ENCODE measurements at regions of chr7 and their contacts with region 1.

Region 1: DNA sequence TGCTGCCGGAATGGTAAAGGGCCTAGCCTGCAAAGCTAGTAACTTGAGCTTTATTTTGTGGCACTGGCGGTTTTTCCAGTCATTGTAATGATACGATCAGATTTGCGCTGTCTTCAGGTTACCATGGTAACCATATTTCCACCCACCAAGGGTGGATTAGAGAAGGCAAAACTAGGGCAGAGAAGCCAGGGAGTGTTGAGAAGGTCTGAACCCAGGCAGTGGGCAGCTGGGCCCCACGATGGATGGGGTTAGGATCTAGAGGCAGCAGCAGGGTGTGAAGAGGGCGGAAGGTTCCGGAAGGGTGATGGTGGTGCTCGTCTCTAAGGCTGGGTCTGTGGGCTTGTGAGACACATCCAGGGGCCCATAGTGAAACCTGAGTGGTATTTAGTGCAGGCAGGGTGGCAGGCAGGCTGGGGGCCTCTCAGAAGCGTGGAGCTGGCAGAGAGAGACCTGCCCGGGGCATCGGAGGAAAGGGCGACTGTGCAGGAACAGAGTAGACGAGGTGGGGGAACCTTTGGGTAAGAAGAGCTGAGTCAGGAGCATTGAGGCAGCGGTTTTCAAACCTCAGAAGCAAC is 87.9 kb upstream of the GTF2I start:
- DNase-seq: no peak
- H3K4me3 ChIP-seq: no peak overlapping the region
- H3K27ac ChIP-seq: no peak overlapping the region
- H3K4me1 ChIP-seq: no peaks in the 10 kb centered on the region
- H3K27me3 ChIP-seq: no peaks in the 10 kb centered on the region
- CTCF ChIP-seq: no peak
- POLR2A ChIP-seq: no peak

Region 2: DNA sequence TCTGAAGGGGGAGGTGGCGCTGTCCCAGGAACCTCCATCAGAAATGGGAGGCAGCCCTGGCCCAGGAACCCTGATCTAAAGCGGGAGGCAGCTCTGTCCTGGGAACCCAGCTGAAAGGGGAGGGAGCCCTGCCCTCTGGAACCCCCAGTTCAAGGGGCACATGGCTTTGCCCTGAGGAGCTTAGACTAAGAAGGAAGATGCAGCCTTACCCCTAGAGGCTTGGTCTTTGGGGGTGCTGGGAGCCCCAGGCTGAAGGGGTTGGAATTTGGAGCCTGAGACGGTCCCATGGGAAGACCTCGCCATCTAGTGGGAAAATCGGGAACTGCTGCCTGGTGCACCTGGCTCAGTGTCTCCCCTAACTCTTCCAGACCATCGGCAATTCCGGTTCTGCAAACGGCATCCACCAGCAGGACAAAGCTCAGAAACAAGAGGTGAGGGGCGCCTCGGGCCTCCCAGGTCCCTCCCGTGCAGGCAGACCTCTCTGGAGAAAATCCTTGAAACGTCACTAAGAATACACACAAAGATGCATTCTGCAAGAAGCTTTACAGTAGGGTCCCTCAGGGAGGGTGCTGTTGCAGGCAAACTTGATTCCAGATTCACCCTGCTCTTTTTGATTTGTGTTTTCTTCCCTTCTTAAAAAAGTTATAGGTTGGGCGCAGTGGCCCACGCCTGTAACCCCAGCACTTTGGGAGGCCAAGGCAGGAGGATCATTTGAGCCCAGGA is 168.3 kb before region 1 on chr7:
- intact Hi-C with region 1: no loop called
- DNase-seq: peak; percentile 85
- H3K4me3 ChIP-seq: no peak overlapping the region
- H3K27ac ChIP-seq: no peak overlapping the region
- H3K4me1 ChIP-seq: no peaks in the 10 kb centered on the region
- H3K27me3 ChIP-seq: no peaks in the 10 kb centered on the region
- CTCF ChIP-seq: peak; percentile 73 to 97 (median 91)
- POLR2A ChIP-seq: no peak

Region 3: DNA sequence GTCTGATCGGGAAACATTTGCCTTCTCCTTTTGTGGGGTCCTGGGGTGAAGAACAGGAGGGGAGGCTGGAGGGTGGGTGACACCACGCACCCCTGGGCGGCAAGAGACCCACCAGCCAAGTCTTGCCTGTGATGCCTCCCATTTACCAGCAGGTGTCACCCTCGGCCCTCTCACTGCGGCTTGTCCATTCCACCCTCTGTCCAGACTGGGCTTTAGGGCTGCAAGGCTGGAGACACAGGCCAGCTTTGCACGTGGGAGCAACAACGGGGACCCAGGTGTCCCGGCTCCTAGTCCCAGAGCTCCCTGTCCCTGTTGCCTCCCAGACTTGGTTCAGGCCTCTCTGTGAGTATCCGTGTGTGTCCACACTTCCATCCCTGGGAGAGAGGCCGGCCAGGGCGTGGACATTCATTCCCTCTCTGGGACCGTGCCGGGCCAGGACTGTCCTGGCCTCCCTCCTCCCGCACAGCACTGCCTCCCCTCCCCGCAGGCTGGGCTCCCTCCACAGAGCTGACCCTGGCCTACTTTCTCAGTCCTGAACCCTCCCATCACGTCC is 152.1 kb before region 1 on chr7:
- intact Hi-C with region 1: loop called (anchors 10 kb)
- DNase-seq: peak; percentile 76
- H3K4me3 ChIP-seq: no peak overlapping the region
- H3K27ac ChIP-seq: no peak overlapping the region
- H3K4me1 ChIP-seq: no peaks in the 10 kb centered on the region
- H3K27me3 ChIP-seq: no peaks in the 10 kb centered on the region
- CTCF ChIP-seq: peak; percentile 91 to 93 (median 93)
- POLR2A ChIP-seq: no peak

Measured in testis (tissue), 5 donors.